Mammary epithelial cell (primary cell): ENCODE measurements at regions of chr6 and their contacts with region 1.

Region 1: DNA sequence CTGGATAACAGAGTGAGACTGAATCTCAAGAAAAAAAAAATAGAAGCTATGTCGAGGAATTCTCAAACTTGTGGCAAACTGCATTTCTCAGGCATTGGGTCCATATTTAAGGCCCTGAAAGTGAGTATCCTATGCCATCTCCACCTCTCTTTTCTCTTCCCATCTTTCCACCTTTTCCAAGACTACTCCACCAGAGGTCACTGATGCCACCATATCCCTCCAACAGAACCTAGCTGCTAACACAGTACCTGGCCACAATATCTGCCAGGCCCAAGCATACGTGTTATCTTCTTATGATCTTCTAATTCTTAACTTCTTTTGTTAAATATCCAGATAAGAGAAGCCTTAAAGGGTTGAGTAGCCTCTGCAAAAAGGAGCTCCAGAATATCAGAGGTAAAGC is 8.2 kb upstream of the ADGRF4 start:
- DNase-seq: no peak
- H3K4me3 ChIP-seq: no peak overlapping the region
- H3K27ac ChIP-seq: no peak overlapping the region
- H3K4me1 ChIP-seq: no peaks in the 10 kb centered on the region
- H3K27me3 ChIP-seq: no peaks in the 10 kb centered on the region
- CTCF ChIP-seq: peak in 1 of 2 donors; percentile 46

Region 2: DNA sequence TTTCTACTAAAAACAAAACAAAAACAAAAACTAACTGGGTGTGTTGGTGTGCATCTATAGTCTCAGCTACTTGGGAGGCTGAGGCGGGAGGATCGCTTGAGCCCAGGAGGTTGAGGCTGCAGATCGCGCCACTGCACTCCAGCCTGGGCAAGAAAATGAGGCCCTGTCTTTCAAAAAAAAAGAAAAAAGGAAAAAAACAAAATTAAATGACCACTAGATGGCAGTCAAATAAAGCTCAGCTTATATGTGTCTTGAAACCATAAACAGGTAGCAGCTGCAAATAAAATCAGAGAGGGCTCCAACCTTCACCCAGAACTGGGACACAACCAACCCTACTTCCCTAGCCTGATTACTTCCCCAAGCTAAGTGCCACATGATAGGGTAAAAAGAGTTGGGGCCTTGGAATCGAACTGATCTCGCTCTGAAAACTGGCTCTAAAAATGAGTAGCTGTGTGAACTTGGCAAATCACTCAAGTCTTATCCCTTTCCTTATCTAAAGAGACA is 58.9 kb before region 1 on chr6:
- CTCF ChIA-PET with region 1: no interaction called
- dilution Hi-C with region 1: no loop called
- in situ Hi-C with region 1: no loop called
- intact Hi-C with region 1: loop called (anchors 1 kb)
- DNase-seq: peak; percentile 60
- H3K4me3 ChIP-seq: no peak overlapping the region
- H3K27ac ChIP-seq: no peak overlapping the region
- H3K4me1 ChIP-seq: peaks cover 5% of the 10 kb centered on the region
- H3K27me3 ChIP-seq: no peaks in the 10 kb centered on the region
- CTCF ChIP-seq: peak; percentile 49 to 59

Region 3: GRCh38 chr6:47780510-47781356 is 90.5 kb after region 1 on chr6:
- CTCF ChIA-PET with region 1: no interaction called
- dilution Hi-C with region 1: no loop called
- in situ Hi-C with region 1: no loop called
- intact Hi-C with region 1: loop called (anchors 1 kb)
- DNase-seq: peak; percentile 73
- H3K4me3 ChIP-seq: no peak overlapping the region
- H3K27ac ChIP-seq: no peak overlapping the region
- H3K4me1 ChIP-seq: peaks cover 9% of the 10 kb centered on the region
- H3K27me3 ChIP-seq: no peaks in the 10 kb centered on the region
- CTCF ChIP-seq: peak; percentile 65 to 69

Region 4: DNA sequence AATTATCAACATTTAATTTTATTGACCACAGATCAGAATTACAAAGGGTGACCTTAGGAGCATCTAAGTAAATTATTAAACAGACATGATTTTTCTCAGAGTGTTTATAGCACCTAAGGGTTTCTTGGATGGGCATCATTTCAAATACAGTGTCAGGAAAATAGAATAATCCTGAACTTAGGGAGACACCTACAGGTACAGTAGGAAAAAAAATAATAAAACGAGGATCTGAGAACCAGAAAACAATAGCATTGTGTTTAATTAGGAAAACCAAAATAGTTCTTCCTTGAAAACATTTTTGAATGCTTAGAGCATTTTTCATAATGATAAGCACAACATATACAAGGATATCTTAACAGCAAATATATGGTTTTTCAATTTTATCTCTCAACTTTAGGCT is 1733.6 kb after region 1 on chr6:
- CTCF ChIA-PET with region 1: no interaction called
- dilution Hi-C with region 1: no loop called
- in situ Hi-C with region 1: no loop called
- intact Hi-C with region 1: loop called (anchors 5 kb)
- DNase-seq: peak; percentile 10
- H3K4me3 ChIP-seq: no peak overlapping the region
- H3K27ac ChIP-seq: no peak overlapping the region
- H3K4me1 ChIP-seq: no peaks in the 10 kb centered on the region
- H3K27me3 ChIP-seq: no peaks in the 10 kb centered on the region
- CTCF ChIP-seq: peak; percentile 14 to 51